Sigmoid colon (tissue), 7 donors: ENCODE measurements at regions of chr11 and their contacts with region 1.

Region 1: GRCh38 chr11:26993965-26994457 is at the start of gene FIBIN:
- DNase-seq: peak; percentile 73
- H3K4me3 ChIP-seq: peak within 1 kb of the TSS; percentile 62 to 81 (median 67)
- H3K27ac ChIP-seq: peak within 1 kb of the TSS; percentile 87 to 89 (median 88)
- H3K4me1 ChIP-seq: peaks cover 3 to 56% (median 30%) of the 10 kb centered on the region in 4 donors
- H3K27me3 ChIP-seq: no peaks in the 10 kb centered on the region
- CTCF ChIP-seq: peak in 1 of 4 experiments; percentile 20
- EP300 ChIP-seq: no peak
- POLR2A ChIP-seq: peak; percentile 25 to 40
- total RNA-seq, gene FIBIN: 29.1 to 54.6 (median 34.1) TPM

Region 2: DNA sequence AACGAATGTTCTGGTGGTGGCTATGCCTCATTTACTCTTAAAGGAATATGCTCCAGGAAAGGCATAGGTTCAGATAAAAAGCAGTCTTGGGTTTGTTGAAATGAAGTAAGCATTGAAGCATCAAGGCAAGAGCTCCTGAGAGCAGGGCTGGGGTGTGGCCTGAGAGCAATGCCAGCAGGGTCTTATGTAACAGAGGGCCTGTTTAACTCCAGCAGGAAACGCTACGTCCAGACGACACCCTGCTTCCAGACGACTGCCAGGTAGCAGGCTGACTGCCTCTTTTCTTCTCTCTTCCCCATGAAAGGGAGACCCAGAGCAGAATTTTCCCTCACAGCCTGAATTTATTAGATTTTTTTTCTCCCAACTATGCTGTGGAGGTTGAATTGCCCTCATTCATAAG is 145.0 kb before region 1 on chr11:
- intact Hi-C with region 1: loop called (anchors 10 kb)
- DNase-seq: peak; percentile 81
- H3K4me3 ChIP-seq: no peak overlapping the region
- H3K27ac ChIP-seq: peak overlapping the region; percentile 31 to 68 (median 60)
- H3K4me1 ChIP-seq: peaks cover 0 to 50% (median 28%) of the 10 kb centered on the region in 4 donors
- H3K27me3 ChIP-seq: no peaks in the 10 kb centered on the region
- CTCF ChIP-seq: no peak
- EP300 ChIP-seq: no peak
- POLR2A ChIP-seq: no peak

Region 3: DNA sequence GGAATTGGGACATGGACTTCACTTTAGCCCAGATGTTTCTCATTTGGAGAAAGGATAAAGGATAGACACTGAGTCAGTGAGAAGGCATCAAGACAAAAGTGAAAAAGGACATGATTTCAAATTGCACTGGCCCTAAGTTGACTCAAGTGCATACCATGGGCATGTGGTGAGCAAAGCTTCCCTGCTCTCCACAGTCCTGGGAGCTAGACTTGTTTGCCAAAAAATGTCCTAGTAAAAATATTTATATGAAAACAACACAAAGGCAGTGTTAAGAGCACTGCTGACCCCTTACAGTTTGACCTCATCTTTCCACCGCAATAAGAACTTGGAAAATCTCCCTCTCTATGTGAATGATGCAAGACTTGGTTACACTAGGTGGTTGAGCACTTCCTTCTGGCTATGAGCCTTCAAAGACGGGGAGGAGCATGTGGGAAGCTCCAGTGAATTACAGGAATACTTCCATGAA is 46.6 kb before region 1 on chr11:
- intact Hi-C with region 1: loop called (anchors 5 kb)
- DNase-seq: peak; percentile 88
- H3K4me3 ChIP-seq: no peak overlapping the region
- H3K27ac ChIP-seq: peak overlapping the region; percentile 53 to 78 (median 70)
- H3K4me1 ChIP-seq: peaks cover 0 to 60% (median 37%) of the 10 kb centered on the region in 4 donors
- H3K27me3 ChIP-seq: no peaks in the 10 kb centered on the region
- CTCF ChIP-seq: no peak
- EP300 ChIP-seq: peak in 2 of 4 donors; percentile 42 to 68
- POLR2A ChIP-seq: no peak

Region 4: DNA sequence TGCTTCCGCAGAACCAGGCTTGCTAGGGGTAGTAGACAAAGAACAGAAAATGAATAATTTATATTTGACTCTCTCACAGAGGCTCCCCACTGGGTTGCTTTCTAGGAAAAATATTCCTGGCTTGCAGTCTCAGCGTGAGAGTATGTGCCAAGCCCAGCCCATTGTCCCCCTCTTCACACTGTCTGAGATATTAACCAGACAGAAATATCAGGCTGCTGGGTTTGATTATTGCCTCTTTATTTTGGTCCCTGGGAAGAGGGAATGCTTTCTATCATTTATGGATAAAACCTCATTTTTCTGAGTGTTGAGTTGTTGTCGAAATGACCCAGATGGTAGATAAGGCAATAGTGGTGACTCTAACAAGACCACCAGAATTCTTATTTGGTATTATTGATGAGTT is 1482.0 kb after region 1 on chr11:
- intact Hi-C with region 1: no loop called
- DNase-seq: no peak
- H3K4me3 ChIP-seq: no peak overlapping the region
- H3K27ac ChIP-seq: no peak overlapping the region
- H3K4me1 ChIP-seq: peaks cover 0 to 15% (median 10%) of the 10 kb centered on the region in 4 donors
- H3K27me3 ChIP-seq: no peaks in the 10 kb centered on the region
- CTCF ChIP-seq: no peak
- EP300 ChIP-seq: no peak
- POLR2A ChIP-seq: no peak